ENCODE measurements at regions of chr5 and their contacts with region 1.

Region 1: DNA sequence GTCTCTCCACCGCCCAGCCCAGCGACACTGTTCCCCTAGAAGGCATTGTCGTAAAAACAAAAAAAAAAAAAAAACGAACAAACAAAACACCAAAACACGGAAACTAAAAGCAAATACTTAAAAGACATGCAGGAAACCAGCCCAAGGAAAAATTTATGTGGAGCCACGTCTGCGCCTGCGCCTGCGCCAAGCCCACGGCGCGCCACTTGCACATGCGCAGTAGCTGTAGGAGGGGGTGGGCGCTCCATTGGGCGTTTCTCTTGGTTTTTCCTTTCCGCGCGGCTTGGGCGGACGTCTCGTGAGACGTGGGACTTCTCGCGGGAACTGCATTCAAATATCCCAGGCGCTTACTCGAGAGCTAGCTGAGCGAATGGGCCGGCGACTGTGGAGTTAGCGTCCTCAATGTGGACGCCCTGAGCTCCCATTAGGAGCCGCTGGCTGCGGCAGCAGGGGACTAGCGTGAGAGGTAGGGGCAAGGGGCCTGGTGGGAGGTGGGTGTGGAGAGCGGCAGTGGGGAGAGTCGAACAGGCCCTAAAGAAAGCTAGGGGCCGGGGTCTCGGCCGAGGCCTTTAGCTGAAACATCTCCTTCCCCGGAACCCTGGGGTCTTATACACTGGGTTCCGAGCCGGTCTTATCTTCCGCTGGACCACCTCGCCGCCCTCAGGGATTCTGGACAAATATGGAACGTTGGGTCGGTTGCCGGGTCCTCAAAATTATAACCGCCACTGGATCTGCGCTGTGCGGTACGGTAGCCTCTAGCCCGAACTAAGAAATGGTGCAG is at the start of gene SPDL1:
- DNase-seq: peak; percentile 95
- ATAC-seq: peak; percentile 95
- H3K4me3 ChIP-seq: peak within 1 kb of the TSS; percentile 66
- H3K27ac ChIP-seq: peak within 1 kb of the TSS; percentile 72
- H3K4me1 ChIP-seq: peaks cover 2% of the 10 kb centered on the region; the same call in 1 of the 2 replicates
- H3K27me3 ChIP-seq: no peaks in the 10 kb centered on the region
- CTCF ChIP-seq: no peak
- POLR2A ChIP-seq: peak; percentile 87
- RAD21 ChIP-seq: no peak
- total RNA-seq, gene SPDL1: 18.8 and 48.6 TPM in 2 replicates

Region 2: DNA sequence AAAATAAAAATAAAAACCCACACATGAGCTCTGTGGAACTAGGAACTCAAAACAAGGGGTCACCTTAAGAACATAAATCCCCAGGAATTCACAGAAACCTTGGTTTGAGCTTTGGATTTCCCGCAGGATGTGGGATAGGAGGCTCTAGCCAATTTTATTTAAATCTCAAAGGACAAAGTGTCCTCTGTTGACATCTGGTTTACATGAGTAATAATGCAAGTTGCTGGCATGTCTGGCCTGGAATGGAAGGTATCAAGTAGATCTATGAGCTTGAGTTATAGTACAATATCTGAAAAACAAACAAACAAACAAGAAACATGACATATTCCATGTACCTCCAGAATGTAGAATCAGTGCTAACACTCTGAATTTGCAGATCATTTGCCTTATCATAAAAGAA is 188.5 kb before region 1 on chr5:
- CTCF ChIA-PET with region 1: no interaction called
- POLR2A ChIA-PET with region 1: no interaction called
- dilution Hi-C with region 1: no loop called
- in situ Hi-C with region 1: no loop called
- intact Hi-C with region 1: no loop called
- DNase-seq: no peak
- ATAC-seq: no peak
- H3K4me3 ChIP-seq: no peak overlapping the region
- H3K27ac ChIP-seq: no peak overlapping the region
- H3K4me1 ChIP-seq: no peaks in the 10 kb centered on the region
- H3K27me3 ChIP-seq: no peaks in the 10 kb centered on the region
- CTCF ChIP-seq: no peak
- POLR2A ChIP-seq: no peak
- RAD21 ChIP-seq: no peak

Region 3: DNA sequence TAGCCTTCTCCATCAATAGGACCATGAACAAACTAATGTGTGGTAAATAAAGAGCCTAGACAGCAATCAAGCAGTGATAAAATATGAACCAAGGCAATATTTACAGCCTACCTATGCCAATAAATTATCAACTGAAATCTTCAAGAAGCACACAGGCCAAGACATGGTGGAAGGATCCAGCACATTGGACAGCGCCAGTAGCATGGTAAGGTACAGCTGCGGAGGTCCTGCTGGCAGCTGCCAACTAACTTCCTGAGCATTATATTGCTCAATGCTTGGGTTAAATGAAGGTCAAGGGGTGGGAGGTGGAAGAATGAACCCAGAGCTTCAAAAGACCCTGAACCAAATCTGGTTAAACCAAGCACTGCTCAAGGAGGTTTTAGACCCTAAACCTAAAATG is 16.5 kb before region 1 on chr5:
- CTCF ChIA-PET with region 1: interaction called, 10 read pairs
- POLR2A ChIA-PET with region 1: no interaction called
- dilution Hi-C with region 1: no loop called
- in situ Hi-C with region 1: no loop called
- intact Hi-C with region 1: no loop called
- DNase-seq: peak; percentile 10
- ATAC-seq: no peak
- H3K4me3 ChIP-seq: no peak overlapping the region
- H3K27ac ChIP-seq: no peak overlapping the region
- H3K4me1 ChIP-seq: no peaks in the 10 kb centered on the region
- H3K27me3 ChIP-seq: peaks cover 8% of the 10 kb centered on the region
- CTCF ChIP-seq: no peak
- POLR2A ChIP-seq: no peak
- RAD21 ChIP-seq: no peak

Region 4: GRCh38 chr5:169695919-169696490 is 112.4 kb after region 1 on chr5:
- CTCF ChIA-PET with region 1: no interaction called
- POLR2A ChIA-PET with region 1: interaction called, 6 read pairs
- dilution Hi-C with region 1: no loop called
- in situ Hi-C with region 1: no loop called
- intact Hi-C with region 1: loop called (anchors 2 kb)
- DNase-seq: peak; percentile 98
- ATAC-seq: peak; percentile 92
- H3K4me3 ChIP-seq: no peak overlapping the region
- H3K27ac ChIP-seq: peak overlapping the region; percentile 73
- H3K4me1 ChIP-seq: peaks cover 17% of the 10 kb centered on the region
- H3K27me3 ChIP-seq: no peaks in the 10 kb centered on the region
- CTCF ChIP-seq: no peak
- POLR2A ChIP-seq: 0 out of 2 replicates have a peak, but pooled peaks have one; percentile 5
- RAD21 ChIP-seq: no peak; the same call in 1 of the 2 replicates

Region 5: DNA sequence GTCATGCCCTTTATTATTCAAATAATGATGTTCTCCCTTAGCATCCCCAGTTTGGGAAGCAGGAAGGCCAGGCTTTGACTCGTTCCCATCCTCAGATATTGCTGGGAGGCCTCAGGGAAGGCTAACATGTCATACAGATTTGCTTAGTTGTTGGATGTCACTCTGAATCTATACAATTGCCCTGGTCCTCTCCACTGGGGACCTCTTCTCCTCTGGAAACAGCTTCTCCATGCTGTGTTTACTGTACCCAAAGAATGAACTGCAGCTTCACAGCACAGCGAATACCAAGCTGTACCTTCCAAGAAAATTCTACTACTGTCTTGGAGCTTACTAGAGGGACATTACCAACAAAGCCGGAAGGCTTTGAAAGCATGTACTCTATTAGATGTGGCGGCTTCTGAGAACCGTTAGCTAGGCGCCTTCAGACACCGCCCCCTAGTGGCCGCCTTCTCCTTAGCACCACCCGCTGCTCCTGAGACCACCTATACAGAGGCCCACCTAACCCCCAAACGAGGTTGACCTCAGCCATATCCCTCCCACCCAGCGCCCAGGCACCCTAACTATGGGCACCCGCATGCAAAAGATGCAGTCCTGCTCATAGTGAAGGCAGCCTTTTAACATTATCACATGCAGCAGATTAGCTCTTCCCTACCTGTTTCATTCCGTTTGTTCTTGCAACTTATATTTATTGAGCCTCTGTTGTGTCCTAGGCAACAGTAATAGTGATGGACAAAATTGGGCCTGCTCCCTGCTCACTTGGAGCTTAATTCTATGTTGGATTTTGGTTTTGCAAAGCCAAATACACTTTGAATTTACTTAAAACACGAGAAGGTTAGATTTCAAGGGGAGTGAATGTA is 487.2 kb after region 1 on chr5:
- CTCF ChIA-PET with region 1: interaction called, 3 read pairs
- POLR2A ChIA-PET with region 1: no interaction called
- dilution Hi-C with region 1: no loop called
- in situ Hi-C with region 1: no loop called
- intact Hi-C with region 1: loop called (anchors 5 kb)
- DNase-seq: peak; percentile 45
- ATAC-seq: peak; percentile 97
- H3K4me3 ChIP-seq: no peak overlapping the region
- H3K27ac ChIP-seq: no peak overlapping the region
- H3K4me1 ChIP-seq: no peaks in the 10 kb centered on the region
- H3K27me3 ChIP-seq: peaks cover 4% of the 10 kb centered on the region
- CTCF ChIP-seq: peak; percentile 62
- POLR2A ChIP-seq: no peak
- RAD21 ChIP-seq: peak; percentile 72

Region 6: DNA sequence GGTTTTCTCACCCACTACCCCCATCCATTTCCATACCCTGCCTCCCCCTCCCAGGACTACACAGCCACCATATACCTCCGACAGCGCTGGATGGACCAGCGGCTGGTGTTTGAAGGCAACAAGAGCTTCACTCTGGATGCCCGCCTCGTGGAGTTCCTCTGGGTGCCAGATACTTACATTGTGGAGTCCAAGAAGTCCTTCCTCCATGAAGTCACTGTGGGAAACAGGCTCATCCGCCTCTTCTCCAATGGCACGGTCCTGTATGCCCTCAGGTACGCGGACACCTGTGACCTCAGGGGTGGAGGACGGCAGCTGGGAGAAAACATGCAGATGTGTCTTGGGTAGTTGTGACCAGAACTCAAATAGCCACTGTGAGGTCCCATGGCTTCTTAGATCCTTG is 1211.5 kb after region 1 on chr5:
- CTCF ChIA-PET with region 1: no interaction called
- POLR2A ChIA-PET with region 1: no interaction called
- dilution Hi-C with region 1: no loop called
- in situ Hi-C with region 1: no loop called
- intact Hi-C with region 1: no loop called
- DNase-seq: no peak
- ATAC-seq: no peak
- H3K4me3 ChIP-seq: no peak overlapping the region
- H3K27ac ChIP-seq: no peak overlapping the region
- H3K4me1 ChIP-seq: no peaks in the 10 kb centered on the region
- H3K27me3 ChIP-seq: peaks cover 6% of the 10 kb centered on the region
- CTCF ChIP-seq: no peak
- POLR2A ChIP-seq: no peak
- RAD21 ChIP-seq: no peak